Activated CD4-positive, alpha-beta T cell treated with anti-CD3 and anti-CD28 coated beads for 36 hours (primary cell): ENCODE measurements at regions of chr17 and their contacts with region 1.

Region 1: GRCh38 chr17:55421179-55421934 is at the start of gene MMD:
- DNase-seq: no peak
- ATAC-seq: peak; percentile 22
- H3K4me3 Mint-ChIP-seq: peak within 1 kb of the TSS; percentile 86
- H3K27ac Mint-ChIP-seq: peak within 1 kb of the TSS; percentile 89
- H3K4me1 Mint-ChIP-seq: peaks cover 44% of the 10 kb centered on the region
- H3K27me3 Mint-ChIP-seq: peaks cover 22% of the 10 kb centered on the region
- total RNA-seq, gene MMD: 17.4 to 19.6 TPM

Region 2: DNA sequence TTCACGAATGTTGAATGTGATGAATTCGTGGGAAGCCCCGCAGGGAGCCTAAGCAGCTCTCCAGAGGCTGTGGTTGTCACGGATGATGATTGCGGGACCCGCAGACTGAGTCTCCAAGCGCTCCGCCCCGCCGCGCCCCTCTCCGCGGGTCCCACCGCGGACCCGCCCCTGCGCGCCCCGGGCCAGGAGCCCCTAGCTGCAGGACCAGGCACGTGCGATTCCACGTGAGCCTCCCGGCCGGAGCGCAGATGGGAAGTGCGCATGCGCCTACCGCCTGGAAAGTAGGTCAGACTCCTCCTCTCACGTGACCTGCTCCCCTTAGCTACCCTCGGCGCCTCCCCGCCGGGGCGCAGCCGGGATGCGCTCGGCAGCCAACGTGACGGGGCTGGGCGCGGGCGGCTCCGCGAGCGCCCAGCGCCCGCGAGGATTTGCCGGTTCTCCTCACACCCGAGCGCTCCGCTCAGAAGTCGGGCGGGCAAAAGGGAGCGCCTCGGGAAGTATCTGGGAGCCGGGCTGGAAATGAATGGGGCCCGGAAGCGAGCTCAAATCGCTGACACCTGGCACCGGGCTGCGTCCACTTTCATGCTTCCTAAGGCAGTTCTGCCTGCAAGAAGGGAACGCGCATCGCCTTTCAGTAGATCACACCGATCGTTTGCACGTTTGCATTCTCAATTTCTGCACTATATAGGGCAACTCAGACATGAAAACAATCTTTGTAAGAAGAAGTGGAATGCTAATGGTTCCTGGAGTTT is 183.0 kb before region 1 on chr17:
- CTCF ChIA-PET with region 1: no interaction called
- POLR2A ChIA-PET with region 1: no interaction called
- intact Hi-C with region 1: loop called (anchors 1 kb)
- DNase-seq: peak; percentile 91
- ATAC-seq: peak; percentile 99
- H3K4me3 Mint-ChIP-seq: peak overlapping the region; percentile 74
- H3K27ac Mint-ChIP-seq: peak overlapping the region; percentile 59
- H3K4me1 Mint-ChIP-seq: peaks cover 14% of the 10 kb centered on the region
- H3K27me3 Mint-ChIP-seq: peaks cover 11% of the 10 kb centered on the region

Region 3: DNA sequence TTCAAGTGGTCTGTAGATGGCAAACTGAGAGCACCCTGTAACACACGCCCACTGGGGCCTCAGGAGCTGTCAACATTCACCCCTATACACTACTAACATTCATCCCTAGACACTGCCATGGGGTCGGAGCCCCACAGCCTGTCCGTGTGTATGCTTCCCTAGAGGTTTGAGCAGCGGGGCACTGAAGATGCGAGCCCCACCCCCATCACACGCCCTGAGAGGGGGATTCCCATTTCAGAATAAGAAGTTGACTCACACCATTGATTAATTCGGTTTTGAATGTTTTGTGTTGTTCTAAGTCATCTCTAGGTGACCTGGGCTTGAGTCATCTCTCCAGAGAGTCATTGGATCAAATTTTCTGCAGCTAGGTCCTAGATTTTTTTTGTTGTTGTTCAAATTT is 37.6 kb after region 1 on chr17:
- CTCF ChIA-PET with region 1: no interaction called
- POLR2A ChIA-PET with region 1: no interaction called
- intact Hi-C with region 1: loop called (anchors 1 to 5 kb)
- DNase-seq: peak; percentile 83
- ATAC-seq: peak; percentile 99
- H3K4me3 Mint-ChIP-seq: no peak overlapping the region
- H3K27ac Mint-ChIP-seq: no peak overlapping the region
- H3K4me1 Mint-ChIP-seq: peaks cover 24% of the 10 kb centered on the region
- H3K27me3 Mint-ChIP-seq: peaks cover 14% of the 10 kb centered on the region

Region 4: DNA sequence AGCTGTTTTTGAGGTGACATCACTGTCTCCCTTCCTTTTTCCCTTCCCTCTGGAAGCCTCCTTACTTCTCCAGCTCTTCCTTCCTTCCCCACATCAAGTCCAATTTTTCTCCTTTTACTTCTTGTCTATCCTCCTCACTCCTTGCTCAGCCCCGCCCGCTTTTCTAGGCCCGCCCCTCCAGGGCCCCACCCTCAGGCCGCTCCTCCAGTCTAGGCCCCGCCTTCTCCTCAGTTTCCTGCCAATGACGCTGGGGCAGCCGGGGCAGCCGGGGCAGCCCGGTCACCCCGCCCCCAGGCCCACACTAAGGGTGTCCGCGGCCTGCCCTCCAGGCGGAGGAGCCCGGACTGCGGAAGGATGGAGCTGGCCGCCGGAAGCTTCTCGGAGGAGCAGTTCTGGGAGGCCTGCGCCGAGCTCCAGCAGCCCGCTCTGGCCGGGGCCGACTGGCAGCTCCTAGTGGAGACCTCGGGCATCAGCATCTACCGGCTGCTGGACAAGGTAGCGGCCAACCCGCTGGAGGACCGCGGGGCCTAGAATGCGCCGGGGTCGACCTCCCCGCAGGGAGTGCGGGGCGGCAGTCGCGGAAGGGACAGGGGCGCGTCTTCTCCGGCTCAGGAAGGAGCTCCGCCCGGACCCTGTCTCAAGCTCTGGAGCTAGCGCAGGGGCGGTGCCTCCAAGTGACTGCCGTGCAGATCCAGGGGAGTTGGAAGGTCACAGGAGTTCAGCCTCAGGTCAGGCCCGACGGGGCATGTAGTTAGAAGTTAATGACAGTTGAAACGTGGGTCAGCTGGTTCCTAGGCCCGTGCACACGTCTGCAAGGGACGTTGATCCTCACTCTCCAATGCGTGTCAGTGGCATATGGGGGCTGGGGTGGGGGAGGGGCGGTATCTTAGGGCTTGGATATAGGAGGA is 329.6 kb after region 1 on chr17 and contains the start of gene PCTP:
- CTCF ChIA-PET with region 1: no interaction called
- POLR2A ChIA-PET with region 1: no interaction called
- intact Hi-C with region 1: loop called (anchors 1 to 2 kb)
- DNase-seq: peak; percentile 93
- ATAC-seq: peak; percentile 99
- H3K4me3 Mint-ChIP-seq: peak within 1 kb of the TSS; percentile 77
- H3K27ac Mint-ChIP-seq: peak within 1 kb of the TSS; percentile 44
- H3K4me1 Mint-ChIP-seq: peaks cover 11% of the 10 kb centered on the region
- H3K27me3 Mint-ChIP-seq: peaks cover 26% of the 10 kb centered on the region
- total RNA-seq, gene PCTP: 7.6 to 8.1 TPM

Region 5: GRCh38 chr17:56786989-56787482 is 1365.7 kb after region 1 on chr17:
- CTCF ChIA-PET with region 1: no interaction called
- POLR2A ChIA-PET with region 1: no interaction called
- intact Hi-C with region 1: loop called in 1 of 2 experiments (anchors 5 kb)
- DNase-seq: peak; percentile 82
- ATAC-seq: peak; percentile 98
- H3K4me3 Mint-ChIP-seq: peak overlapping the region; percentile 37
- H3K27ac Mint-ChIP-seq: peak overlapping the region; percentile 97
- H3K4me1 Mint-ChIP-seq: peaks cover 34% of the 10 kb centered on the region
- H3K27me3 Mint-ChIP-seq: peaks cover 1% of the 10 kb centered on the region